Activated CD8-positive, alpha-beta T cell treated with anti-CD3 and anti-CD28 coated beads for 36 hours (primary cell): ENCODE measurements at regions of chr16 and their contacts with region 1.

Region 1: GRCh38 chr16:13919683-13920509 is at the start of gene ERCC4:
- DNase-seq: peak; percentile 100
- ATAC-seq: peak; percentile 98
- H3K4me3 Mint-ChIP-seq: peak within 1 kb of the TSS; percentile 93
- H3K27ac Mint-ChIP-seq: peak within 1 kb of the TSS; percentile 84
- H3K4me1 Mint-ChIP-seq: peaks cover 18% of the 10 kb centered on the region
- H3K27me3 Mint-ChIP-seq: no peaks in the 10 kb centered on the region
- CTCF ChIP-seq: peak; percentile 92
- total RNA-seq, gene ERCC4: 6.2 to 13.3 TPM

Region 2: DNA sequence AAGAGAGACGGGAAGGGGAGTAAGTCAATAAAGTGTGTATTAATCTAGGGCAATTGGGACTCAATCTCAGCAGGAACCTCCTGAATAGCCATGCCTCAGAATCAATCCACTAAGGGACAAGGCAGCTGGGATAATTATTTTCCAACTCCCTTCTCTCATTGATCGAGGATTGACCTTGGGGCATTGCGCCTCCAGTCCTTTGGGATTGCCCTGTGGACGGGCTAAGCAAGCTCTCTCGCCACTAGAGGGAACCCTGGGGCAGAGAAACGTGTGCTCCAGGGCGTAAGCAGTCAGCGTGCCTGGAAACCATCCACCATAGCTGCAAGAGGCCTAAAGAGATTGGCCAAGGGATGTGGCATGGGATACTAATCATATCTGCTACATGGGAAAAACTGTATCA is 53.8 kb before region 1 on chr16:
- CTCF ChIA-PET with region 1: interaction called, 10 read pairs
- POLR2A ChIA-PET with region 1: no interaction called
- intact Hi-C with region 1: no loop called
- DNase-seq: peak; percentile 68
- ATAC-seq: peak; percentile 61
- H3K4me3 Mint-ChIP-seq: no peak overlapping the region
- H3K27ac Mint-ChIP-seq: no peak overlapping the region
- H3K4me1 Mint-ChIP-seq: no peaks in the 10 kb centered on the region
- H3K27me3 Mint-ChIP-seq: peaks cover 15% of the 10 kb centered on the region
- CTCF ChIP-seq: peak; percentile 62

Region 3: GRCh38 chr16:13935408-13935807 is 15.5 kb after region 1 on chr16:
- CTCF ChIA-PET with region 1: interaction called, 74 read pairs
- POLR2A ChIA-PET with region 1: no interaction called
- intact Hi-C with region 1: no loop called
- DNase-seq: peak; percentile 31
- ATAC-seq: no peak
- H3K4me3 Mint-ChIP-seq: no peak overlapping the region
- H3K27ac Mint-ChIP-seq: no peak overlapping the region
- H3K4me1 Mint-ChIP-seq: peaks cover 14% of the 10 kb centered on the region
- H3K27me3 Mint-ChIP-seq: no peaks in the 10 kb centered on the region
- CTCF ChIP-seq: peak; percentile 69

Region 4: GRCh38 chr16:13948086-13948485 is 28.2 kb after region 1 on chr16:
- CTCF ChIA-PET with region 1: interaction called, 10 read pairs
- POLR2A ChIA-PET with region 1: no interaction called
- intact Hi-C with region 1: no loop called
- DNase-seq: no peak
- ATAC-seq: no peak
- H3K4me3 Mint-ChIP-seq: no peak overlapping the region
- H3K27ac Mint-ChIP-seq: no peak overlapping the region
- H3K4me1 Mint-ChIP-seq: no peaks in the 10 kb centered on the region
- H3K27me3 Mint-ChIP-seq: no peaks in the 10 kb centered on the region
- CTCF ChIP-seq: no peak

Region 5: GRCh38 chr16:13968835-13969234 is 48.9 kb after region 1 on chr16:
- CTCF ChIA-PET with region 1: no interaction called
- POLR2A ChIA-PET with region 1: no interaction called
- intact Hi-C with region 1: no loop called
- DNase-seq: no peak
- ATAC-seq: no peak
- H3K4me3 Mint-ChIP-seq: no peak overlapping the region
- H3K27ac Mint-ChIP-seq: no peak overlapping the region
- H3K4me1 Mint-ChIP-seq: no peaks in the 10 kb centered on the region
- H3K27me3 Mint-ChIP-seq: peaks cover 27% of the 10 kb centered on the region
- CTCF ChIP-seq: no peak

Region 6: GRCh38 chr16:14249291-14250032 is 329.6 kb after region 1 on chr16:
- CTCF ChIA-PET with region 1: interaction called, 11 read pairs
- POLR2A ChIA-PET with region 1: no interaction called
- intact Hi-C with region 1: no loop called
- DNase-seq: peak; percentile 66
- ATAC-seq: no peak
- H3K4me3 Mint-ChIP-seq: no peak overlapping the region
- H3K27ac Mint-ChIP-seq: no peak overlapping the region
- H3K4me1 Mint-ChIP-seq: peaks cover 3% of the 10 kb centered on the region
- H3K27me3 Mint-ChIP-seq: no peaks in the 10 kb centered on the region
- CTCF ChIP-seq: peak; percentile 90

Region 7: DNA sequence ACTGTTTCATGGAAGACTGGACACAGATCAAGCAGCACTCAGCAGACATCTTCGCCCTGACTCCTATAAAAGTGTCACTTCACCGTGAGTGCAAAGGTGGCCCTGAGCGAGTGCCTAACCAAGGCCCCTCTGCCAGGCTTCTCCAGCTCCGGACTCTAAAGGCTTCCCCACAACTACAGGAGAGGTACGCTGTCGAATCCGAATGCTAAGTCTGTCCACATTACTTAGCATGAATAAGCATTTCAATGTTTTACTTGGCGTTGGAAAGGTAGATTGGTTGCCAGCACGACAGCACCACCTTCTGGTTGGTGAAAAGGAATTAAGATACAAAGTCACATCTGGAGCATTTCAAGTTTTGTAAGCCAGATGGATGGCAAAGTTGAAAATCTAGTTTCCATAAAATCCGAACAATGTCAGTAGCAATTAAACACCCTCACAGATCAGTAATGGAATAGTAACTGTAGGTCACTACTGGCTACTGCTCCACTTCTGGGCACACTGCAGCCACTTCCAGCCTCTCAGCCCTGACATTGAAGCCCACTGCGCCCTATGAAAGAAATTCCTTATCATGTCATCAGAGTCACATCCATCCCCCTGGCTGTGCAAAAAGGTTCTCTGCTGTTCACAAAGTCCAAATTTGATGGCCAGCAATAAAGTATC is 609.2 kb after region 1 on chr16:
- CTCF ChIA-PET with region 1: interaction called, 3 read pairs
- POLR2A ChIA-PET with region 1: no interaction called
- intact Hi-C with region 1: loop called (anchors 5 kb)
- DNase-seq: peak; percentile 64
- ATAC-seq: peak; percentile 42
- H3K4me3 Mint-ChIP-seq: no peak overlapping the region
- H3K27ac Mint-ChIP-seq: no peak overlapping the region
- H3K4me1 Mint-ChIP-seq: peaks cover 2% of the 10 kb centered on the region
- H3K27me3 Mint-ChIP-seq: no peaks in the 10 kb centered on the region
- CTCF ChIP-seq: peak; percentile 67